ENCODE measurements at regions of chr5 and their contacts with region 1.

Region 1: GRCh38 chr5:147743678-147744374 is 38.7 kb downstream of the JAKMIP2 start:
- DNase-seq: peak; percentile 99
- H3K4me3 ChIP-seq: no peak overlapping the region
- H3K27ac ChIP-seq: peak overlapping the region; percentile 97
- H3K4me1 ChIP-seq: peaks cover 91% of the 10 kb centered on the region
- H3K27me3 ChIP-seq: no peaks in the 10 kb centered on the region
- CTCF ChIP-seq: peak; percentile 21; the same call in 1 of the 2 replicates

Region 2: GRCh38 chr5:147711019-147711418 is 32.8 kb before region 1 on chr5:
- CTCF ChIA-PET with region 1: no interaction called
- POLR2A ChIA-PET with region 1: interaction called, 3 read pairs
- intact Hi-C with region 1: loop called (anchors 2 kb)
- DNase-seq: peak; percentile 56
- H3K4me3 ChIP-seq: no peak overlapping the region
- H3K27ac ChIP-seq: peak overlapping the region; percentile 82
- H3K4me1 ChIP-seq: peaks cover 78% of the 10 kb centered on the region
- H3K27me3 ChIP-seq: no peaks in the 10 kb centered on the region
- CTCF ChIP-seq: no peak

Region 3: DNA sequence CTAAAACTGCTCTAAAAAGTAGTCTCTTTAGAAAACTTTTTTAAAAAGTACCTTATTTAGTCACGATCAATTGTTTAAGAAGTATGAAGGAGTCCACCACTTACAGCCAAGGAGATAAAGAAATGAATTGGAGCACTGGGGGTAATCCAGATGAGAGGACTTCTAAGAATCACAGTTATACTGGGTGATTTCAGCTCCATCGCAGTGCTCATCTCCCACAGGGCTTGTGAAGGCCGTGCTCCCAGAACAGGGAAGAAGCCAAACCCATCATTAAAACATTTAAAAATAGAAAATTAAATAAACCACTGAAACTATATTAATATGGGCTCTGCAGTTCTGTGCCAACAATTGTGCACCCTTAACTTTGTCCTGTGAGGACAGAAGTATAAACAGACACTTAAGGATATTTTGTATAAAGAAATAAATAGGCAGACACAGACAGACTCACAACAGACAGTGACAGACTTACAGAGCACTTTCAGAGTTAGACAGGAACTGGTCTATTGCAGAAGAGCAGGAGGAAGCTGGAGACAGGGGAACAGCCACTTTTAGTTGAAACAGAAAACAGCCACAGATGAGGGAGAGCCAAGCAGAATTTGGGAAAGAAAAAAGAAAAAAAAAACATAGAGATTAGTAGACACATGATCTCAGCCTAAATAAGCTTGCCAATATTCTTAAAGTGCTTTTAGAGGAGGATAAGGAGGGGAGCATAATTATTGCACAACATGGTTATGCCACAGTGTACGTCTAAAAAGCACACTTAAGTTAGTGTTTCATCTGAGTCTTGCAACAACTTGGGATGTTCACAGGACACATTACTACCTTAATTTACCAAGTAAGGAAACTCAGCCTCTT is 721.8 kb after region 1 on chr5:
- CTCF ChIA-PET with region 1: no interaction called
- POLR2A ChIA-PET with region 1: no interaction called
- intact Hi-C with region 1: no loop called
- DNase-seq: no peak
- H3K4me3 ChIP-seq: no peak overlapping the region
- H3K27ac ChIP-seq: no peak overlapping the region
- H3K4me1 ChIP-seq: no peaks in the 10 kb centered on the region
- H3K27me3 ChIP-seq: peaks cover 62% of the 10 kb centered on the region
- CTCF ChIP-seq: no peak

Measured in A673 (cell line).